ENCODE measurements at regions of chr4 and their contacts with region 1.

Region 1: GRCh38 chr4:73869130-73870050 is at the start of gene CXCL1:
- DNase-seq: peak; percentile 56
- ATAC-seq: peak; percentile 29
- H3K4me3 ChIP-seq: peak within 1 kb of the TSS; percentile 65
- H3K27ac ChIP-seq: peak within 1 kb of the TSS; percentile 80
- H3K4me1 ChIP-seq: peaks cover 74% of the 10 kb centered on the region
- H3K27me3 ChIP-seq: no peaks in the 10 kb centered on the region
- CTCF ChIP-seq: no peak
- total RNA-seq, gene CXCL1: 239 and 267 TPM in 2 replicates

Region 2: DNA sequence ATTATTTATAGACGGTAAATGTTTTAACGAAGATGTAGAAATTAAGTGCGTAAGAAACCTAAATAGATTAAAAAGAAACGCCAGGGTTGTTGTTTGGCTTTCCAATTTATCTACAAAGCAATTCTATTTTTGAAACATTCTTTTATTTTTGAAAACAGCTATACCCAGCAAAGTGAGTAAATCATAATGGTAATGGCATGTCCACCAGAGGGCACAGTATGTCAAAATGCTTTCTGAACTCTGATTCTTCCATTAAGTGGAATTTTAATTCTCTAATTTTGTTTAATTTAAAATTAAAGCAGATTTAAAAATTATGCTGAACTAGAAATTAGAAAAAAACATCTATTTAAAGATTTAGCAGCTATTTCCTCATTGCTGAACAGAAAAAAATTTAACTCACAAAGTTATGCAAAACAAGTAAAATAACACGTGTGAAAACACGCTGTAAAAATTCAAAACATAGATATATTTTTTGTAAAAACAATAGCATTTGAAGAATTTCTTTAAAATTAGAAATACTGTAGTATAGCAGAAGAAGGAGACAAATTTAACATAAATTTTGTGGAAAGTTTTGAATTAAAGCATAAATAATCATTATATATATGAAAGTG is 275.7 kb before region 1 on chr4:
- CTCF ChIA-PET with region 1: no interaction called
- POLR2A ChIA-PET with region 1: no interaction called
- intact Hi-C with region 1: loop called (anchors 10 kb)
- DNase-seq: peak; percentile 76
- ATAC-seq: 0 out of 2 replicates have a peak, but pooled peaks have one; percentile 35
- H3K4me3 ChIP-seq: no peak overlapping the region
- H3K27ac ChIP-seq: no peak overlapping the region
- H3K4me1 ChIP-seq: peaks cover 15% of the 10 kb centered on the region
- H3K27me3 ChIP-seq: no peaks in the 10 kb centered on the region
- CTCF ChIP-seq: peak; percentile 92

Region 3: DNA sequence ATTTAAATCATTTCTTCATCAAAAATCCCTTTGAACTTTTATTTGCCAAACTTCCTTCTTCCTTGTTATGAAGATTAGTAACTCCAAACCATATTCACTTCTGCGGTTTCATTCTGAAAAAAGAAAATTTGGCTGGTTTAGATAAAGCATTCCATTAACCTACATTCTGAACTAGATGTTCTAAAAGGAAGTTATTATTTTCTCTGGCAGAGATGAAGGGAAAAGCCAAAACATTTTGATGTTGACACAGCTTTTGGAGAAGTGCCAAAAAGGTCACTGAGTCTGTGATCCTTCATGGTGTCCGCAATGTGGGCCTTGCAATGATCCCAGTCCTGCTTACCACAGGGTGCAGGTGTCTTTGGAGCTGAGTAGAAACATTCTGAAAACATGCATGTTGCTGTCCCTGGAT is 93.1 kb before region 1 on chr4:
- CTCF ChIA-PET with region 1: no interaction called
- POLR2A ChIA-PET with region 1: no interaction called
- intact Hi-C with region 1: no loop called
- DNase-seq: peak; percentile 48
- ATAC-seq: no peak
- H3K4me3 ChIP-seq: no peak overlapping the region
- H3K27ac ChIP-seq: no peak overlapping the region
- H3K4me1 ChIP-seq: peaks cover 9% of the 10 kb centered on the region; the same call in 1 of the 2 replicates
- H3K27me3 ChIP-seq: no peaks in the 10 kb centered on the region
- CTCF ChIP-seq: no peak

Region 4: GRCh38 chr4:73917081-73917501 is 47.7 kb after region 1 on chr4:
- CTCF ChIA-PET with region 1: interaction called, 8 read pairs
- POLR2A ChIA-PET with region 1: interaction called, 6 read pairs
- intact Hi-C with region 1: loop called (anchors 1 kb)
- DNase-seq: peak; percentile 94
- ATAC-seq: peak; percentile 91
- H3K4me3 ChIP-seq: no peak overlapping the region
- H3K27ac ChIP-seq: peak overlapping the region; percentile 75
- H3K4me1 ChIP-seq: peaks cover 33% of the 10 kb centered on the region
- H3K27me3 ChIP-seq: no peaks in the 10 kb centered on the region
- CTCF ChIP-seq: no peak

Region 5: DNA sequence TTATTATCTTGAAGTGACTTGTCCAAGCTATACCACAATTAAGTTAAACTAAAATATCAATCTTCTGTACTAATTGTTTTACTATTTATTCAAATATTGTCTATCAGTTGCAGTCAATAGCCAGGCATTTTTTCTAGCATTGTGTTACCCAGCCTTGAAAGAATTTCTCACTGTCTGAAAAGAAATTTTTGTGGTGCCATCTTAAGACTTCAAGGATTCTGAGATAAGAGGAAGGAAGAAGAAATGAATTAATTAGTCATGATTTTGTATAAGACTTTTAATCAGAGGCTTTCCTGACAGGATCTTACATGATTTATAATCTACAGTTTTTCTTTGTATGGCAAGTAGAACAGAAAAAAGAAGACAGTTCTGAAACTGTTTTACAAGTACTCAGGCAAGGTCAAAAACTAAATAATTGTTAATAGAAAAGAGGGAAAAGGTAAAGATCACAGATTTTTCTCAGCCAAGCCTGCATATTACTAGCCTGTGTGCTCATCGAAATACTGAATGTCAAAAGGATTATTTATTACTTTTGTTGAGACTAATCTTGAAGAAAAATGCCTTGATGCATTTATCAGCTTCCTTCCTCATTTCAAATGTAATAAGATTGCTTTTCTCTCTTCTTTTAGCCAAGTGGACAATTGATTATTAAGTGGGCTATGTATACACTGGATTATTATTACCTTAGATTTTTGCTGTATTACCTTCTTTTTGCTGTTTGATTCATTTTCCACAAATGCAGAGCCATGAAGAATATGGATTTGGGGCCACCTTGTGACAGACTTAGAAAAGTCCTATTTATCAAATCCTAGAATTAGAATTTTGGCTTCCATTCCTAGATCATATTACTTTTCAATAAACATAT is 53.6 kb after region 1 on chr4:
- CTCF ChIA-PET with region 1: interaction called, 8 read pairs
- POLR2A ChIA-PET with region 1: interaction called, 3 read pairs
- intact Hi-C with region 1: loop called (anchors 1 kb)
- DNase-seq: peak; percentile 83
- ATAC-seq: peak; percentile 70
- H3K4me3 ChIP-seq: no peak overlapping the region
- H3K27ac ChIP-seq: peak overlapping the region; percentile 59
- H3K4me1 ChIP-seq: peaks cover 26% of the 10 kb centered on the region
- H3K27me3 ChIP-seq: no peaks in the 10 kb centered on the region
- CTCF ChIP-seq: peak; percentile 91

Region 6: DNA sequence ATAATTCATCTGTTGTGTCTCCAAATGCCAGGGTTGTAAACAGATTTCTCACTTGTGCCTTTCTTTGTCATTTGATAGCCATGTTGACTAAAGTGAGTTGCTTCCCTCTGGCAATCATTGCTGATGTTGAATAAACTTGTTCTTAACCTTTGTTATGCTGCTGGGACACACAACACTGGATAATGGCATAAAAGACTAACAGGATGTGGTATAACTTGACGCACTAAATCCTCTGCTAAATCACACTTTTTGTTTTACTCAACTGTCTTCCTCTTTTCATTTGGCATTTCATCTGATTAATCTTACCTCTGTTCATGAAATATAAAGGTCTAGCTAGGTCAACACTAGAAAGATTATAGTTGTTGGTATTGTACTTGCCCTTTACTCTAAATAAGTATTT is 146.7 kb after region 1 on chr4:
- CTCF ChIA-PET with region 1: no interaction called
- POLR2A ChIA-PET with region 1: no interaction called
- intact Hi-C with region 1: loop called (anchors 5 kb)
- DNase-seq: peak; percentile 94
- ATAC-seq: peak; percentile 94
- H3K4me3 ChIP-seq: no peak overlapping the region
- H3K27ac ChIP-seq: peak overlapping the region; percentile 91
- H3K4me1 ChIP-seq: peaks cover 24% of the 10 kb centered on the region
- H3K27me3 ChIP-seq: no peaks in the 10 kb centered on the region
- CTCF ChIP-seq: no peak

Region 7: GRCh38 chr4:74038161-74039064 is 169.0 kb after region 1 on chr4 and contains the start of gene CXCL3:
- CTCF ChIA-PET with region 1: interaction called, 9 read pairs
- POLR2A ChIA-PET with region 1: interaction called, 3 read pairs
- intact Hi-C with region 1: loop called (anchors 1 kb)
- DNase-seq: peak; percentile 78
- ATAC-seq: peak; percentile 86
- H3K4me3 ChIP-seq: peak within 1 kb of the TSS; percentile 78
- H3K27ac ChIP-seq: peak within 1 kb of the TSS; percentile 51
- H3K4me1 ChIP-seq: peaks cover 48% of the 10 kb centered on the region
- H3K27me3 ChIP-seq: no peaks in the 10 kb centered on the region
- CTCF ChIP-seq: peak; percentile 75
- total RNA-seq, gene CXCL3: 25.1 and 28.9 TPM in 2 replicates

Region 8: GRCh38 chr4:74098450-74098994 is 229.1 kb after region 1 on chr4:
- CTCF ChIA-PET with region 1: interaction called, 7 read pairs
- POLR2A ChIA-PET with region 1: no interaction called
- intact Hi-C with region 1: loop called (anchors 1 kb)
- DNase-seq: no peak
- ATAC-seq: peak; percentile 5
- H3K4me3 ChIP-seq: peak overlapping the region; percentile 78
- H3K27ac ChIP-seq: peak overlapping the region; percentile 98
- H3K4me1 ChIP-seq: peaks cover 28% of the 10 kb centered on the region
- H3K27me3 ChIP-seq: no peaks in the 10 kb centered on the region
- CTCF ChIP-seq: no peak